Endothelial cell of umbilical vein (primary cell): ENCODE measurements at regions of chr10 and their contacts with region 1.

Region 1: DNA sequence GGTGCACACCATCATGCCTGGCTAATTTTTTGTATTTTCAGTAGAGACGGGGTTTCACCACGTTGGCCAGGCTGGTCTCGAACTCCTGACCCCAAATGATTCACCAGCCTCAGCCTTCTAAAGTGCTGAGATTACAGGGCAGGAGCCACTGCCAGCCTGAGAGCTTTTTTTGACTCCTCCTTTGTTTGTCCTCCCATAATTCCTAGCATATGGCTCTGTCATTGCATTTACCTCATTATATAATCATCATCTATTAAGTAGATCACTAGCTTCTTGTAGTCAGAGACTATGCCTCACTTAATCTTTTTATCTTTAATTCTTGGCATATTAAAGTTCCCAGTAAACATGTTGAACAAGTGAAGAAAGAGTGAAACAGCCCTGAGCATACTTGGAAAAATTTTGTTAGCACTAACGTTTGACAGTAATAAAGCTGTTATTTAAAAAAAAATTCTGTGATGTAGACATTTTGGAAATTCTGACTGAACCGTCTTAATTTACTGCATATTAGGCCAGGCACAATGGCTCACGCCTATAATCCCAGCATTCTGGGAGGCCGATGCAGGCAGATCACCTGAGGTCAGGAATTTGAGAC is 82.0 kb downstream of the CPEB3 start:
- DNase-seq: peak; percentile 15
- H3K4me3 ChIP-seq: no peak overlapping the region
- H3K27ac ChIP-seq: no peak overlapping the region
- H3K4me1 ChIP-seq: peaks cover 10% of the 10 kb centered on the region
- H3K27me3 ChIP-seq: no peaks in the 10 kb centered on the region
- CTCF ChIP-seq: no peak
- POLR2A ChIP-seq: no peak

Region 2: GRCh38 chr10:92024700-92025099 is 184.1 kb before region 1 on chr10:
- CTCF ChIA-PET with region 1: no interaction called
- POLR2A ChIA-PET with region 1: no interaction called
- dilution Hi-C with region 1: no loop called
- intact Hi-C with region 1: no loop called
- DNase-seq: no peak
- H3K4me3 ChIP-seq: no peak overlapping the region
- H3K27ac ChIP-seq: no peak overlapping the region
- H3K4me1 ChIP-seq: peaks cover 9% of the 10 kb centered on the region
- H3K27me3 ChIP-seq: no peaks in the 10 kb centered on the region
- CTCF ChIP-seq: no peak
- POLR2A ChIP-seq: no peak

Region 3: DNA sequence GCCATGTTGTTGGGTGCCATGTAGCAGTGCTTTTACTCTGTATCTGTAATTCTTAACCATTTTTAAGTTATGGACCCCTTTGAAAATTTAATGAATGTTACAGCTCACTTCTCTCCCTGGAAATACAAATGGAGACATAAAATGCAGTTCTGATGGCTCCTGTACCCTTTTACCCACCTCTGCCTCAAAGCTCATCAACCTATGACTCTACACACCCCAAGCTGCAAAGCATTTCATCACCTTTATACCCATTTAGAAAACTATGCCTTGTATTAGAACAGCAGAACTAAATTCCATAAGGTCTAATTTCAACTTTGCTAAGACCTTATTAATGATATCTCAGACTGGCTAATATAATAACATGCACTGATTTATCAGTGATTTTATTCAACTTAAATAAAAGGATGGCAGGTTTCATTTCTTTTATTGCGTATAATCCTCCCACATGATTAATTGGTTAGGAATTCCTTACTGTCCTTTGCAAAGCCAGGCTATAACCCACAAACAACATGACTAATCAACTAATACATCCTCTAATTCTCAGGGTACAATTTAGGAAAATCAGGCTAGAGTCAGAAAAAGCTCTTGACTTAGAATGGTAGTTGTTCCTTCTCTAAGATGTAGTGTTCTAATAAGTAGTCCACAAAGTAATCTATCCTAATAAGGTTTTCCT is 13.9 kb after region 1 on chr10:
- CTCF ChIA-PET with region 1: interaction called, 13 read pairs
- POLR2A ChIA-PET with region 1: no interaction called
- dilution Hi-C with region 1: no loop called
- intact Hi-C with region 1: no loop called
- DNase-seq: peak; percentile 34
- H3K4me3 ChIP-seq: no peak overlapping the region
- H3K27ac ChIP-seq: peak overlapping the region; percentile 22
- H3K4me1 ChIP-seq: peaks cover 9% of the 10 kb centered on the region
- H3K27me3 ChIP-seq: no peaks in the 10 kb centered on the region
- CTCF ChIP-seq: no peak
- POLR2A ChIP-seq: no peak

Region 4: DNA sequence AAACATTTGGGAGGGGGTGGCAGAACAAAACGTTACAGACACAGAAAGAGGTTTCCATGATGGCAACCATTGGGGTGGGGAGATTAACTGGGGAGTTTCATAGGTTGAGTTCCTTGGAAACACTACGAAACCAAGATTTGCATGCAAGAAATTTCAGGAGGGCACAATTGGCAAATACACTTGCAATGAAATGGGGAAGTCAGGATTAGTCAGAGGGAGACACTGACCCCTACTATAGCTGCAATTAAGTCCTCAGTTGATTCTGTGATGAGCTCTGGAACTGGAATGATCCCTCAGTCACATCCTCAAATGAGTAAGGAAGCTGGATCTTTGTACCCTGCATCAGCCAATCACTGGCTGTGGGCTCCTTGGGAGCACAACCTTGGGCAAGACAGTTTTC is 59.9 kb after region 1 on chr10:
- CTCF ChIA-PET with region 1: no interaction called
- POLR2A ChIA-PET with region 1: no interaction called
- dilution Hi-C with region 1: no loop called
- intact Hi-C with region 1: no loop called
- DNase-seq: no peak
- H3K4me3 ChIP-seq: no peak overlapping the region
- H3K27ac ChIP-seq: no peak overlapping the region
- H3K4me1 ChIP-seq: no peaks in the 10 kb centered on the region
- H3K27me3 ChIP-seq: no peaks in the 10 kb centered on the region
- CTCF ChIP-seq: no peak
- POLR2A ChIP-seq: no peak

Region 5: DNA sequence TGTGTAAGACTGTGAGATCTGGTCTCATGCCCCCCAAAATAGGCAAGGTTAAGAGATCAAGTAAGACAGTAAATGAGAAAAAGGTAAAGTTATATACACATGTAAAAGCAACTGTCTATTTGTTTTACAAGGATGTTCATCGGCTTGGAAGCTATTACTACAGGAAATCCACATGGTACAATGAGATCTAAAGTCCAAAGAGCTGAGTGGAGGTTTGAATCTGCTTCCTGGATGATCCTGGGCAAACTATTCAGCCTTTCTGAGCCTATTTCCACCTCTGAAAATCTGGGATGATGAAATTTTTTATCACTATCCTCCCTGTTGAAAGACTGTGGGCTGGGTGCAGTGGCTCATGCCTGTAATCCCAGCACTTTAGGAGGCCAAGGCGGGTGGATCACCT is 242.1 kb after region 1 on chr10:
- CTCF ChIA-PET with region 1: no interaction called
- POLR2A ChIA-PET with region 1: no interaction called
- dilution Hi-C with region 1: no loop called
- intact Hi-C with region 1: no loop called
- DNase-seq: no peak
- H3K4me3 ChIP-seq: no peak overlapping the region
- H3K27ac ChIP-seq: no peak overlapping the region
- H3K4me1 ChIP-seq: no peaks in the 10 kb centered on the region
- H3K27me3 ChIP-seq: no peaks in the 10 kb centered on the region
- CTCF ChIP-seq: no peak
- POLR2A ChIP-seq: no peak

Region 6: GRCh38 chr10:92530421-92530820 is 321.6 kb after region 1 on chr10:
- CTCF ChIA-PET with region 1: no interaction called
- POLR2A ChIA-PET with region 1: no interaction called
- dilution Hi-C with region 1: no loop called
- intact Hi-C with region 1: no loop called
- DNase-seq: no peak
- H3K4me3 ChIP-seq: no peak overlapping the region
- H3K27ac ChIP-seq: no peak overlapping the region
- H3K4me1 ChIP-seq: no peaks in the 10 kb centered on the region
- H3K27me3 ChIP-seq: no peaks in the 10 kb centered on the region
- CTCF ChIP-seq: no peak
- POLR2A ChIP-seq: no peak